Lower leg skin (tissue), 4 donors: ENCODE measurements at regions of chr13 and their contacts with region 1.

Region 1: GRCh38 chr13:51452361-51453206 is at the start of gene INTS6:
- DNase-seq: peak; percentile 100
- H3K4me3 ChIP-seq: peak within 1 kb of the TSS; percentile 98
- CTCF ChIP-seq: no peak
- POLR2A ChIP-seq: peak in 1 of 2 donors; percentile 98
- total RNA-seq, gene INTS6: 35.2 to 48.6 (median 41.3) TPM

Region 2: GRCh38 chr13:50340551-50341287 is 1111.9 kb before region 1 on chr13:
- intact Hi-C with region 1: no loop called
- DNase-seq: no peak
- H3K4me3 ChIP-seq: no peak overlapping the region
- CTCF ChIP-seq: no peak
- POLR2A ChIP-seq: no peak

Region 3: DNA sequence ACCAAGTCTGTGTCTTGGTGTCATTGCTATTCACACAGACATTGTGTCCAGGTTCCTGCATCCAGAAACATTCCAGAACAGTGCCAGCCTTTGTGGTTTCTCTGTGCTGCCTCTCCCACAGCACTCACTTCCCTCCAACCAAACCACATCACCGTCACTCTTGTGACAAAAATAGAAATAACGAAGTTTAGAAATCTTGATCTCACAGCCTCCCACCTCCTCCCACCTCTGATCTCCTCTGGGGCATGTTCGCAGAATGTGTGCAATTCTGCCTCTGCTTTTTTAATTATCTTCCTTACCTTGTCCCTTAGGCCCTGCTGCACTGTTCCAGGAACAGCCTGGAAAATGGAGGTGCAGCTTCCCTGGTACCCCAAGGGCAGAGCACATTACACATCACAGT is 121.8 kb before region 1 on chr13:
- intact Hi-C with region 1: no loop called
- DNase-seq: no peak
- H3K4me3 ChIP-seq: no peak overlapping the region
- CTCF ChIP-seq: no peak
- POLR2A ChIP-seq: no peak

Region 4: DNA sequence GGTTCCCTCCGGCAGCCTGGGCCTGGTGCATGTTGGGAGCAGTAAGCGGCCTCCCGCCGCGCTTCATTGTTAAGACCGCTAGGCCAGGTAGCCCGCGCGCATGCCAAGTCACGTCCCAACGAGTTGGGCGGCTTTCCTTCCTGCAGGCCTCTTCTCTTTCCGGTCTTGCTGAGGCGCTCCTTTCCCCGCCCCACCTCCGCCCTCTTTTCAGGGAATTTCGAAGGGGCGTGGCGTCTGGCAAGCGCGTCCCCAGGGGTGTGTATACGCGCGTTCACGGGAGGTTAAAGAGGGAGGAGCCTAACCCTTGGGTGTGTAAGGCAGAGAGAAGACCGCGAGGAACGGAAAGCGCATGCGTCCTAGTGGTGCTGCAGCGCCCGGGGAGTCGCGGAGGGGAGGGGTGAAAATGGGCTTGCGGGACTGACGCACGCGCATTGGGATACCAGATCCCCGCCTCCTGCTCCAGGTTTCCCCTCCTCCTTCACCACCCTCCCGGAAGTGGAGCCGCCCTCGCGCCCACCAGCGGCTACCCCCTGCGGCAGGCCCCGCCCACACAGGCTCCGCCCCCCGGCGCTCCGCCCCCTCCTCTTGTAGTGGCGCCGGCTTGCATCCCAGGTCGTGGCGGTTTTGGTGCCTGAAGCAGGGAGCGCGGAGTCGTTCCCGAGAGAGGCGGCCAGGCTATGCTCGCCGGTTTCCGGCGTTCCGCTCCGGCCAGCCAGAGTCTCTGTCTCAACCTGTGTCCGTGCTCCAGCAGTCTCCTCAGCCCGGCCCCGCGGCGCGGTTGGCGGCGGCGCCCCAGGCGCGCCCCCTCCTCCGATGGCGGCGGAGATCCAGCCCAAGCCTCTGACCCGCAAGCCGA is 131.5 kb after region 1 on chr13 and contains the start of gene WDFY2:
- intact Hi-C with region 1: loop called (anchors 10 kb)
- DNase-seq: peak; percentile 100
- H3K4me3 ChIP-seq: peak within 1 kb of the TSS; percentile 99
- CTCF ChIP-seq: no peak
- POLR2A ChIP-seq: peak in 1 of 2 donors; percentile 78
- total RNA-seq, gene WDFY2: 20.1 to 40.3 (median 22.4) TPM

Region 5: GRCh38 chr13:51781246-51782022 is 328.9 kb after region 1 on chr13:
- intact Hi-C with region 1: loop called (anchors 5 kb)
- DNase-seq: no peak
- H3K4me3 ChIP-seq: no peak overlapping the region
- CTCF ChIP-seq: no peak
- POLR2A ChIP-seq: no peak

Region 6: GRCh38 chr13:51844862-51845573 is 392.4 kb after region 1 on chr13 and contains the start of gene TMEM272:
- intact Hi-C with region 1: no loop called
- DNase-seq: no peak
- H3K4me3 ChIP-seq: no peak within 1 kb of the TSS
- CTCF ChIP-seq: peak in 1 of 3 donors; percentile 16
- POLR2A ChIP-seq: no peak
- total RNA-seq, gene TMEM272: 0.32 TPM in 1 of 4 donors, not detected in the others